ENCODE measurements at regions of chr12 and their contacts with region 1.

Region 1: GRCh38 chr12:101407436-101408345 is at the start of gene ARL1:
- DNase-seq: peak; percentile 68
- H3K4me3 Mint-ChIP-seq: peak within 1 kb of the TSS; percentile 99
- H3K27ac Mint-ChIP-seq: peak within 1 kb of the TSS; percentile 95
- H3K4me1 Mint-ChIP-seq: peaks cover 25% of the 10 kb centered on the region
- H3K27me3 Mint-ChIP-seq: peaks cover 9% of the 10 kb centered on the region
- total RNA-seq, gene ARL1: 70.8 and 76.9 TPM in 2 replicates

Region 2: DNA sequence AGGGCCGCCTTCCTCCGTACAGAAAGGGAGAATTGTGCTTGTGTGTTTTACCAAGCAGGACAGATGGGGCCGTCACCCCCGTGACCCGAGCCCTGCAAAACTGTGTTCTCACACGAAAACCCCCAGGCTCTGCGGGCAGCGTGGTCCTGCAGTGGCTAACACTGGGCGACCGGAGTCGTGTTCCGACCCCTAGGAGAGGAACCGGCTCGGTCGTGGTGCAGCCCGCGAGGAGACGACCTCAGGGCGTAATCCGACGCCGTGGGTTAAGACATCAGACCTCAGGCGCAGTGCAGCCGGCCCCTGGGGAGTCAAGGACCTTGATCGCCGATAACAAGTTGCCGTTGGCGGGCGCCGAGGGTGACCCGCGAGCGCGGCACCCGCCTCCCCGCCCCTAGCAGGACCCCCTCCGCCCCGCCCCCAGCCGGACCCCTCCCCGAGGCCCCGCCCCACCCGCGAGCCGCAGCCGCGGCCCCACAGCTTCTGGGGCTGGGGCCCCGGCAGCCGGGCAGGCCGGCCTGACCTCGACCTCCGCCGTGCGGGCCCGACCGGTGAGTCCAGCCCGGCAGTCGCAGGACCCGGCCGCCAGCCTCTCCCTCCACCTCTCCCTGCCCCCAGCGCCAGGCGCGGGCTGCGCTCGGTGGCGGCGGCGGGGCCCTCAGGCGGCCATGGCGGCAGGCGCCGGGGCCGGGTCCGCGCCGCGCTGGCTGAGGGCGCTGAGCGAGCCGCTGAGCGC is 289.7 kb after region 1 on chr12 and contains the start of gene CHPT1:
- intact Hi-C with region 1: loop called (anchors 2 kb)
- DNase-seq: peak; percentile 34
- H3K4me3 Mint-ChIP-seq: peak within 1 kb of the TSS; percentile 88
- H3K27ac Mint-ChIP-seq: peak within 1 kb of the TSS; percentile 67
- H3K4me1 Mint-ChIP-seq: peaks cover 23% of the 10 kb centered on the region
- H3K27me3 Mint-ChIP-seq: peaks cover 33% of the 10 kb centered on the region
- total RNA-seq, gene CHPT1: 13.1 and 13.3 TPM in 2 replicates

Region 3: GRCh38 chr12:101759396-101760047 is 351.8 kb after region 1 on chr12:
- intact Hi-C with region 1: loop called (anchors 1 kb)
- DNase-seq: no peak
- H3K4me3 Mint-ChIP-seq: no peak overlapping the region
- H3K27ac Mint-ChIP-seq: no peak overlapping the region
- H3K4me1 Mint-ChIP-seq: no peaks in the 10 kb centered on the region
- H3K27me3 Mint-ChIP-seq: no peaks in the 10 kb centered on the region